CD4-positive, alpha-beta T cell (primary cell): ENCODE measurements at regions of chr11 and their contacts with region 1.

Region 1: GRCh38 chr11:6402561-6402981 is 12.3 kb downstream of the SMPD1 start:
- DNase-seq: peak; percentile 43 to 95 (median 72)
- ATAC-seq: peak; percentile 78
- H3K4me3 ChIP-seq: peak overlapping the region; percentile 31
- H3K4me3 Mint-ChIP-seq: peak overlapping the region; percentile 84
- H3K27ac ChIP-seq: peak overlapping the region; percentile 75 to 91
- H3K27ac Mint-ChIP-seq: peak overlapping the region; percentile 97
- H3K4me1 ChIP-seq: peaks cover 83% of the 10 kb centered on the region
- H3K4me1 Mint-ChIP-seq: peaks cover 96% of the 10 kb centered on the region
- H3K27me3 ChIP-seq: no peaks in the 10 kb centered on the region
- H3K27me3 Mint-ChIP-seq: no peaks in the 10 kb centered on the region
- CTCF ChIP-seq: no peak

Region 2: GRCh38 chr11:6413791-6414201 is 11.2 kb after region 1 on chr11:
- CTCF ChIA-PET with region 1: interaction called, 8 read pairs
- POLR2A ChIA-PET with region 1: interaction called, 163 read pairs
- intact Hi-C with region 1: loop called (anchors 1 kb)
- DNase-seq: peak in 13 of 14 experiments; percentile 48 to 90 (median 72)
- ATAC-seq: peak; percentile 91
- H3K4me3 ChIP-seq: peak overlapping the region; percentile 20
- H3K4me3 Mint-ChIP-seq: no peak overlapping the region
- H3K27ac ChIP-seq: peak overlapping the region; percentile 66 to 82
- H3K27ac Mint-ChIP-seq: no peak overlapping the region
- H3K4me1 ChIP-seq: peaks cover 88% of the 10 kb centered on the region
- H3K4me1 Mint-ChIP-seq: peaks cover 19% of the 10 kb centered on the region
- H3K27me3 ChIP-seq: no peaks in the 10 kb centered on the region
- H3K27me3 Mint-ChIP-seq: no peaks in the 10 kb centered on the region
- CTCF ChIP-seq: no peak

Region 3: GRCh38 chr11:6419009-6419631 is 16.5 kb after region 1 on chr11 and contains the start of gene APBB1:
- CTCF ChIA-PET with region 1: interaction called, 8 read pairs
- POLR2A ChIA-PET with region 1: interaction called, 163 read pairs
- intact Hi-C with region 1: loop called (anchors 1 kb)
- DNase-seq: peak; percentile 61 to 91 (median 74)
- ATAC-seq: peak; percentile 68
- H3K4me3 ChIP-seq: peak within 1 kb of the TSS; percentile 70
- H3K4me3 Mint-ChIP-seq: peak within 1 kb of the TSS; percentile 91
- H3K27ac ChIP-seq: peak within 1 kb of the TSS; percentile 49 to 92
- H3K27ac Mint-ChIP-seq: peak within 1 kb of the TSS; percentile 89
- H3K4me1 ChIP-seq: peaks cover 49% of the 10 kb centered on the region
- H3K4me1 Mint-ChIP-seq: peaks cover 10% of the 10 kb centered on the region
- H3K27me3 ChIP-seq: no peaks in the 10 kb centered on the region
- H3K27me3 Mint-ChIP-seq: peaks cover 7% of the 10 kb centered on the region
- CTCF ChIP-seq: no peak
- total RNA-seq, gene APBB1: 182 to 184 TPM

Region 4: DNA sequence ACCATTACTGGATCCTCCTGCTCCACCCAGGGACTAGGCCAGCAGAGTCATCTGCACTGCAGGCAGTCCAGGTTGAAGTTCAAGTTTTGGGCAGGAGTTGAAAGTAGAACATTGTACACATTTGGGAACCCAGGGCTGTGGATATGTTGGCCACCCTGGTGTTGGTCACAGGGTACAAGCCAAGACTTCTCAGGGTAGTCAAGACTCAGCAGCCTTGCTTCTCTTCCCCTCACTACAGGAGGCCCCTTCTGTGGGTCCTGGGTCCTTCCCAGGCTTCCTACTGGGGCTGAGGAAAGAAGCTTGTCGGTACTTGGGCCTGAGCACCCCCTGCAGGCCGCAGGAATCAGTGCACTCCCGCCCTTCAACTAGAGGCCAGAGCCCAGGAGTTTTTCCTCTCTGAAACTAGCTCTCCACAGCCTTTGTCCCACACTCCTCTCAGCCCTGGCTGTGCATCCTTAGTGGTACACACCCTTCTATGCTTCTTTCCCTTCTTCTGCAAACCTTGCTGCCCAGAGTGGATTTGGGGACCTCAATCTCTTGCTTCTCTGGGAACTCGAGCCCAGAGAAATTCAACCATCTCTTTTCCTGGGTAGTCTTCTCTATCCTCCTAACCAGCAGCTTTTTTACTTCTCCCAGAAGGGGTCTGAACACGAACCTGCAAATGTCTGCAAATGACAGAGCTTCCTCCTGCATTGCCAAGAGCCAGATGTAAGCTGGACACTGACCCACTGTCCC is 40.9 kb after region 1 on chr11:
- CTCF ChIA-PET with region 1: interaction called, 19 read pairs
- POLR2A ChIA-PET with region 1: interaction called, 18 read pairs
- intact Hi-C with region 1: loop called in 1 of 2 experiments (anchors 1 kb)
- DNase-seq: peak; percentile 37 to 82 (median 48)
- ATAC-seq: peak; percentile 91
- H3K4me3 ChIP-seq: no peak overlapping the region
- H3K4me3 Mint-ChIP-seq: no peak overlapping the region
- H3K27ac ChIP-seq: no peak overlapping the region
- H3K27ac Mint-ChIP-seq: no peak overlapping the region
- H3K4me1 ChIP-seq: peaks cover 21% of the 10 kb centered on the region
- H3K4me1 Mint-ChIP-seq: no peaks in the 10 kb centered on the region
- H3K27me3 ChIP-seq: no peaks in the 10 kb centered on the region
- H3K27me3 Mint-ChIP-seq: no peaks in the 10 kb centered on the region
- CTCF ChIP-seq: peak; percentile 89

Region 5: GRCh38 chr11:6473481-6474422 is 71.2 kb after region 1 on chr11 and contains the start of gene TRIM3:
- CTCF ChIA-PET with region 1: no interaction called
- POLR2A ChIA-PET with region 1: interaction called, 11 read pairs
- intact Hi-C with region 1: no loop called
- DNase-seq: peak; percentile 36 to 93 (median 69)
- ATAC-seq: peak; percentile 66
- H3K4me3 ChIP-seq: peak within 1 kb of the TSS; percentile 82
- H3K4me3 Mint-ChIP-seq: peak within 1 kb of the TSS; percentile 87
- H3K27ac ChIP-seq: peak within 1 kb of the TSS; percentile 38 to 76
- H3K27ac Mint-ChIP-seq: peak within 1 kb of the TSS; percentile 66
- H3K4me1 ChIP-seq: peaks cover 29% of the 10 kb centered on the region
- H3K4me1 Mint-ChIP-seq: peaks cover 34% of the 10 kb centered on the region
- H3K27me3 ChIP-seq: no peaks in the 10 kb centered on the region
- H3K27me3 Mint-ChIP-seq: no peaks in the 10 kb centered on the region
- CTCF ChIP-seq: no peak
- total RNA-seq, gene TRIM3: 16.4 to 16.6 TPM

Region 6: DNA sequence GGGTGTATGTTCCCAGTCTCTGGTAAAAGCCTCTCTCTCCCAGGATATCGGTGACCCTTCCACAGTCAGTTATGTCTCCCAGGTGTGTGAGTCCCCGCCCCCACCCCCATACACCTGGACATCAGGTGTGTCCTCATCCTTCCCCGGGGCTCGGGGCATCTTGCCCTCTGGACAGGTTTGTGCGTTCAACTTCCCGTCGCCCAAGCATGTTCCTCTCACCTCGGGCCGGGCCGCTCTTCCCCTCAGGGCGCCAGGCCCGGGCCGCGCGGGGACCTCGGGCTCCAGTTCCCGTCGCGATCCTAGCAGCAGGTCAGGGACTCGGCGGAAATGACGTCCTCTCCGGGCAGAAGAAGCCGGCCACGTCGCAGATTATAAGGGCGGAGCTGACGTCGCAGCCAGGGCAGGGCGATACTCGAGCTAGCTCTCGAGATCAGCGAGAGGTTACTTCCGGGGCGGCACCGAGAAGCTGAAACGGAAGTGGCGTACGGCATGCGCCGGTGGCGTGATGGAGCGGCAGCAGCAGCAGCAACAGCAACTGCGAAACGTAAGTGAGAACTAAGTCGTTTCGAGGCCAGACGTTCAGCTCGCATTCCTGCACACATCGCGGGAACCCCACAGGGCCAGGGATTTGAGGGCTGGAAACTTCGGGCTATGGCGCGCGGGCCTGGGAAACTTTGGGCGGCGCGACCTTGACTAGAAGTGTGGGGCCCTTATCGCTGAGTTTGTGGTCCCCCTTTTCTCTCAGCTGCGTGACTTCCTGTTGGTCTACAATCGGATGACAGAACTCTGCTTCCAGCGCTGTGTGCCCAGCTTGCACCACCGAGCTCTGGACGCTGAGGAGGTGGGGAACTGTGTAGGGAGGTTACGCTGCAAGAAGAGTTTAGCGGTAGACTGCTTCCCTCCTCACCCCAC is 78.7 kb after region 1 on chr11 and contains the starts of genes ARFIP2 and TIMM10B:
- CTCF ChIA-PET with region 1: no interaction called
- POLR2A ChIA-PET with region 1: interaction called, 12 read pairs
- intact Hi-C with region 1: no loop called
- DNase-seq: peak; percentile 92 to 99 (median 96)
- ATAC-seq: peak; percentile 94
- H3K4me3 ChIP-seq: peak within 1 kb of the TSS; percentile 83
- H3K4me3 Mint-ChIP-seq: peak within 1 kb of the TSS; percentile 98
- H3K27ac ChIP-seq: peak within 1 kb of the TSS; percentile 87 to 95
- H3K27ac Mint-ChIP-seq: peak within 1 kb of the TSS; percentile 99
- H3K4me1 ChIP-seq: peaks cover 39% of the 10 kb centered on the region
- H3K4me1 Mint-ChIP-seq: peaks cover 42% of the 10 kb centered on the region
- H3K27me3 ChIP-seq: no peaks in the 10 kb centered on the region
- H3K27me3 Mint-ChIP-seq: no peaks in the 10 kb centered on the region
- CTCF ChIP-seq: no peak
- total RNA-seq, gene ARFIP2: 78.1 to 80.5 TPM
- total RNA-seq, gene TIMM10B: 68.5 to 68.6 TPM